Ascending aorta (tissue), 2 donors: ENCODE measurements at regions of chr19 and their contacts with region 1.

Region 1: GRCh38 chr19:15836595-15837337 is 21.3 kb upstream of the OR10H1 start:
- DNase-seq: peak; percentile 93 to 98
- H3K4me3 ChIP-seq: peak overlapping the region; percentile 79 to 88
- H3K27ac ChIP-seq: peak overlapping the region; percentile 96 to 98
- H3K4me1 ChIP-seq: peaks cover 2 to 5% of the 10 kb centered on the region in 2 donors
- H3K27me3 ChIP-seq: no peaks in the 10 kb centered on the region
- CTCF ChIP-seq: no peak

Region 2: DNA sequence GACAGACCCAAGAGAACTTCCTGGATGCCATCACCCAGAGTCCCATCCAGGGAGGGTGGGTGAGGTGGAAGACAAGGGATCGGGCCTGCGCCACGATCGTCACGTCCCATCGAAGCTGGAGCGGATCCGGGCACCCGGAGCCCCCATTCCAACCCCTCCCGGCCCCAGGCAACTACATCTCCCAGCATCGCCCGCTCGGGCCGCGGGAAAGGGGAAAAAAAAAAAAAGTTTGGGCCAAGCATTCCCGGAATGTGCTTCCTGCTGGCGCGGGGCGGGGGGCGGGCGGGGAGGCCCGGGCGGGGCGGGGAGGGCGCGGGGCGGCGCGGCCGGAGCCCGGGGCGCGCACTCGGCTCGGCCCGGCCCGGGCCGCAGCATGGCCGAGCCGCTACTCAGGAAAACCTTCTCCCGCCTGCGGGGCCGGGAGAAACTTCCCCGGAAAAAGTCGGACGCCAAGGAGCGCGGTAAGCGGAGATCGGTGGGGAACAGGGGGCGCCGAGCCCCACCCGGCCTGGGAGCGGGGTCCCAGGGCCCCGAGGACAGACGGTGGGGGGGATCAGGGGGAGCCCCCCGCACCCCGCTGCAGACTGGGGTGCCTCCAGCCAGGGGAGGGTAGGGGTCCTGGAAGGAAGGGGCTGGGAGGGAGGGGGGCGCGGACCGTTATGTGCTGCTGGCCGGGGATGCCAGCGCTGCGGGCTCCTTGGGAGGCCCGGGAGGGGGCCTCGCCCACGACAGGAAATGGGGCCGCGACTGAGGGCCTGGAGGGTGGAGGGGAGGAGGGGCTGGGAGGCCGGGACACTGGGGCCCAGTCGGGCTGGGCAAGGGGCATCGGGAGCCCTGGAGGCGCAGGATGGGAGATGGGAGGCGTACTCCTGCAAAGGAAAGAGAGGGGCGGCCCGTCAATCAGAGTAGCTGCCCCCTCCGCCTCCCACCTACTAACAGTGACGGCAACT is 729.4 kb before region 1 on chr19 and contains the start of gene SYDE1:
- intact Hi-C with region 1: loop called (anchors 5 kb)
- DNase-seq: peak in 1 of 2 donors; percentile 78
- H3K4me3 ChIP-seq: peak within 1 kb of the TSS; percentile 84 to 95
- H3K27ac ChIP-seq: peak within 1 kb of the TSS; percentile 92 to 97
- H3K4me1 ChIP-seq: peaks cover 4 to 10% of the 10 kb centered on the region in 2 donors
- H3K27me3 ChIP-seq: no peaks in the 10 kb centered on the region
- CTCF ChIP-seq: no peak
- total RNA-seq, gene SYDE1: 104 TPM

Region 3: GRCh38 chr19:15717809-15718208 is 119.0 kb before region 1 on chr19:
- intact Hi-C with region 1: no loop called
- DNase-seq: no peak
- H3K4me3 ChIP-seq: no peak overlapping the region
- H3K27ac ChIP-seq: no peak overlapping the region
- H3K4me1 ChIP-seq: no peaks in the 10 kb centered on the region
- H3K27me3 ChIP-seq: no peaks in the 10 kb centered on the region
- CTCF ChIP-seq: no peak

Region 4: DNA sequence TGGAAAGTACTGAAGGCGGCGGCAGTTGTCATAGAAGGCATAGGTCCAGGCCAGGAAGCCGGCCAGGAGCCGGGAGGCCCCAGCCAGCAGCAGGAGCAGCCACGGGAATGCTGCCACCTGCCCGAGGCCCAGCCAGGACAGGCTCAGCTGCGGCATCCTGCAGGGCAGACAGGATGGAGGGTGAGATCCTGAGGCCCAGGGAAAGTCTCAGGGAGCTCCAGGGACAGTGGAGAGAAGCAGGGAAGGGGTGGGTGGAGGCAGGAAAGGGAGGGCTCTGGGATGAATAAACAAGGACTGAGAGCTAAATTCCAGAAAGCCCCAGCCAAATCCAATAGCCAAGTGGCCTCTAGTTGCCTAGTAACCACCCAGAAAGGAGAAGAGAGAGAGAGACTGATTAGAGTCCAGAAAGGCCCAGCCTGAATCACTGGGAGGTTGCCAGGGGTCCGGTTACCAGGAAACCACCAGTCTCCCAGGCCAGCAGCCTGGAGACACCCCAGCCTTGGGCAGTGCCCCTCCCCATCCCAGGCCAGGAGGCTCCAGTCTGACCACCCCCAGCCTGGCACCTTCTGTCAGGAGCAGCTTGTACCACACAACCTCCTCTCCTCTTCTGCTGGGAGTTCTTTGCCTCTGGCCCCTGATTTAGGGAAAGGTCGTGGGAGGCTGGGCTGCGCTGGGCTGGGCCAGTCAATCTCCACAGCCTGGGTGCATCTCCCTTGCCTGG is 56.9 kb before region 1 on chr19:
- intact Hi-C with region 1: loop called (anchors 1 kb)
- DNase-seq: peak in 1 of 2 donors; percentile 91
- H3K4me3 ChIP-seq: peak overlapping the region in 1 of 2 donors; percentile 27
- H3K27ac ChIP-seq: peak overlapping the region; percentile 84 to 85
- H3K4me1 ChIP-seq: peaks cover 5 to 11% of the 10 kb centered on the region in 2 donors
- H3K27me3 ChIP-seq: no peaks in the 10 kb centered on the region
- CTCF ChIP-seq: no peak

Region 5: DNA sequence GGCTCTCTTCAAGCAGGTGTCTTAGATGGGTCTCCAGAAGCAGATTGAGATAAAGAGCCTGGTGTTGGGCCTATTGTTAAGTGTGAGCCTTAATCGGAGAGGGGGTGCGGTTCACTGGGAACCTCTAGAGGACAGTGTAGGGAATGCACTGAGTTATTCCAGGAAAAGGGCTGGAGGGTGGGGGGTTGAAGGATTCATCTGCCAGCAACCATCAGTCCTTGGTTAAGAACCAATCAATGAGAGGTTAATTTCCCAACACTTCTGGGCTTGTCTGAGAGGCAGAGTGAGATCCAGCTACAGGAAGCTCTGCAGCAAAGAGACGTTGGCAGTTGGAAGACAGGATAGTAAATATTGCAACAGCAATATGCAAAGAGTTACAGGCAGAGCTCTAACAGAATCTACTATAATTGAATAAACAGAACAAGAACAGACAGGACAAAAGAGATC is 32.4 kb after region 1 on chr19:
- intact Hi-C with region 1: no loop called
- DNase-seq: peak in 1 of 2 donors; percentile 52
- H3K4me3 ChIP-seq: no peak overlapping the region
- H3K27ac ChIP-seq: no peak overlapping the region
- H3K4me1 ChIP-seq: no peaks in the 10 kb centered on the region
- H3K27me3 ChIP-seq: no peaks in the 10 kb centered on the region
- CTCF ChIP-seq: peak; percentile 44 to 63 (median 52)

Region 6: GRCh38 chr19:16041299-16041990 is 204.7 kb after region 1 on chr19:
- intact Hi-C with region 1: loop called (anchors 2 kb)
- DNase-seq: peak in 1 of 2 donors; percentile 91
- H3K4me3 ChIP-seq: peak overlapping the region in 1 of 2 donors; percentile 49
- H3K27ac ChIP-seq: peak overlapping the region; percentile 55 to 80
- H3K4me1 ChIP-seq: peaks cover 3 to 12% of the 10 kb centered on the region in 2 donors
- H3K27me3 ChIP-seq: no peaks in the 10 kb centered on the region
- CTCF ChIP-seq: peak; percentile 96 to 99 (median 96)

Region 7: GRCh38 chr19:16062789-16063188 is 226.0 kb after region 1 on chr19:
- intact Hi-C with region 1: loop called (anchors 10 kb)
- DNase-seq: peak in 1 of 2 donors; percentile 65
- H3K4me3 ChIP-seq: no peak overlapping the region
- H3K27ac ChIP-seq: no peak overlapping the region
- H3K4me1 ChIP-seq: peaks cover 0 to 27% of the 10 kb centered on the region in 2 donors
- H3K27me3 ChIP-seq: no peaks in the 10 kb centered on the region
- CTCF ChIP-seq: peak; percentile 41 to 72 (median 67)

Region 8: DNA sequence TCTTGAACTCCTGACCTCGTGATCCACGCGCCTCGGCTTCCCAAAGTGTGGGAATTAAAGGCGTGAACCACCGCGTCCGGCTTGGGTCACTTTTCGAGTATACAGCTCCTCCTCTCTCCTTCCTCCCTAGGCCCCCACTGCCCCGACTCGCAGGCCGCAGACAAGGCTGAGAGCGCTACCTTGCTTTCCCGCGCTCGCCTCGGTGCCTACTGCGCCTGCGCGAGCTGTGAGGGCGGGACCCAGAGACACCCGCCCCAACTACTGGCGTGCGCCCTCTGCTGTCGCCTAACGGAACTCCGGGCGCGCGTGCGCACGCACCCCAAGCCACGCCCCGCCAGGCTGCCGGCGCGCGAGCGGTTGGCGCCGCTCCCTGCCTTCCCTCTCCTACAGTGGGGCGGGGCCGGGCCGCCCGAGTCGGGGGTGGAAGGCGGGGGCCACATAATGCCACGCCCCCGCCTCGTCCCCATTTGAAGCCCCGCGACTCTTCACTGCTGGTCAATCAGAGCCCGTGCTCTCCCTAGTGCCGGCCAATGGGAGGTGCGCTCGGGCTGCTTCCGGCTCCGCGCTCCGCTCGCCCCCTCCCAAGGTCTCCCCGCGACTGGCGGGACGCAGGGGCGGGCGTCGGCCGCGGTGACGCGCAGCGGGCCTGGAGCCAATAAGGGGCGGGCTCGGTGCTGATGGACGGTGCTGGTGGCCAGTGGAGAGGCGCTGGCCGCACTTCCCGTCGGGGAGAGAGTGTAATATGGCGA is 274.6 kb after region 1 on chr19 and contains the start of gene RAB8A:
- intact Hi-C with region 1: loop called (anchors 5 kb)
- DNase-seq: peak; percentile 98 to 99
- H3K4me3 ChIP-seq: peak within 1 kb of the TSS; percentile 96 to 97
- H3K27ac ChIP-seq: peak within 1 kb of the TSS; percentile 88 to 91
- H3K4me1 ChIP-seq: peaks cover 16 to 22% of the 10 kb centered on the region in 2 donors
- H3K27me3 ChIP-seq: no peaks in the 10 kb centered on the region
- CTCF ChIP-seq: peak; percentile 94 to 100 (median 94)
- total RNA-seq, gene RAB8A: 35.1 TPM

Region 9: GRCh38 chr19:16185123-16185767 is 348.5 kb after region 1 on chr19 and contains the start of gene FAM32A:
- intact Hi-C with region 1: loop called (anchors 10 kb)
- DNase-seq: peak; percentile 98 to 100
- H3K4me3 ChIP-seq: peak within 1 kb of the TSS; percentile 87 to 95
- H3K27ac ChIP-seq: peak within 1 kb of the TSS; percentile 77 to 85
- H3K4me1 ChIP-seq: peaks cover 3 to 17% of the 10 kb centered on the region in 2 donors
- H3K27me3 ChIP-seq: no peaks in the 10 kb centered on the region
- CTCF ChIP-seq: peak; percentile 9 to 37 (median 22)
- total RNA-seq, gene FAM32A: 74.4 TPM